Naive thymus-derived CD4-positive, alpha-beta T cell (primary cell): ENCODE measurements at regions of chr19 and their contacts with region 1.

Region 1: GRCh38 chr19:3984908-3985642 is at the start of gene EEF2:
- DNase-seq: peak; percentile 89 to 96 (median 93)
- ATAC-seq: peak; percentile 72
- H3K4me3 ChIP-seq: peak within 1 kb of the TSS; percentile 98
- H3K4me3 Mint-ChIP-seq: peak within 1 kb of the TSS; percentile 91 to 99 (median 98)
- H3K27ac ChIP-seq: peak within 1 kb of the TSS; percentile 87
- H3K27ac Mint-ChIP-seq: peak within 1 kb of the TSS; percentile 93 to 99 (median 96)
- H3K4me1 ChIP-seq: peaks cover 37 to 43% of the 10 kb centered on the region in 2 donors
- H3K4me1 Mint-ChIP-seq: peaks cover 30 to 57% (median 48%) of the 10 kb centered on the region in 7 donors
- H3K27me3 ChIP-seq: no peaks in the 10 kb centered on the region
- H3K27me3 Mint-ChIP-seq: no peaks in the 10 kb centered on the region
- total RNA-seq, gene EEF2: 1,791 to 2,674 (median 2,346) TPM

Region 2: DNA sequence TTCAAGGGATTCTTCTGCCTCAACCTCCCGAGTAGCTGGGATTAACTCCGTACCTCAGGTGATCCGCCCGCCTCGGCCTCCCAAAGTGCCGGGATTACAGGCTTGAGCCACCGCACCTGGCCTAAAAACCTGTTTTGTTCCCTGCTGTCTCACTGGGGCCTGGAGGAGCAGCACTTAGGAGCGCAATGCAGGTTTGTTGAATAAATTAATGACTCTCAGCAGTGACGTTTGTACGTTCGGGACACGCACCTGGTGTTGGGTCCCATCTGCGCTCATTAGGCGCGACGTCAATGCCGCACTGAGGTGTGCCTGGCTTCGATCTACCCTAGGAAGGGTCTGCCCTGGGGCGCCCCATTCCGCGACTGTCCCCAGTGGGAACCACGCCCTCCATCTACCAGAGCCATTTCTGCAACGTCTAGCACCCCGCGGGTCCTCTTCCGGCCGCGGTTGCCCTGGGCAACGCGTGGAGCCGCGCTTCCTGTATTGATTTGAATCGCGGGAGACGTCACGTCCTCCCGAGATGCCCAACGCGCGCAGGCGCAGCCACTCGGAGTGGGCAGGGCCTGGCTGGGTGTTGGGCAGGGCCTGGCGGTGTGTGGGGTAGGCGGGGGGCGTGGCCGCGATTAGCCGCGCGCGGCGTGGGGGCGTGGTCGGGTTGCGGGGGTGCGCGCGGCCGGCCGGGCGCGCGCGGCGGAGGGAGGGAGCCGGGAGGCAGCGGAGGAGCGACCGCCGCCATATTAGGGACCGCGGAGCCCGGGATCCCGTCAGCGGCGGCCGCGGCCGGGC is 479.3 kb before region 1 on chr19 and contains the start of gene FZR1:
- CTCF ChIA-PET with region 1: no interaction called
- POLR2A ChIA-PET with region 1: interaction called, 4 read pairs
- intact Hi-C with region 1: loop called in 1 of 2 experiments (anchors 10 kb)
- DNase-seq: peak; percentile 98 to 100 (median 100)
- ATAC-seq: peak; percentile 96
- H3K4me3 ChIP-seq: peak within 1 kb of the TSS; percentile 97
- H3K4me3 Mint-ChIP-seq: peak within 1 kb of the TSS; percentile 88 to 98 (median 92)
- H3K27ac ChIP-seq: peak within 1 kb of the TSS; percentile 95
- H3K27ac Mint-ChIP-seq: peak within 1 kb of the TSS; percentile 91 to 98 (median 96)
- H3K4me1 ChIP-seq: peaks cover 14 to 23% of the 10 kb centered on the region in 2 donors
- H3K4me1 Mint-ChIP-seq: peaks cover 29 to 57% (median 44%) of the 10 kb centered on the region in 7 donors
- H3K27me3 ChIP-seq: no peaks in the 10 kb centered on the region
- H3K27me3 Mint-ChIP-seq: peaks cover 0 to 3% (median 0%) of the 10 kb centered on the region in 5 donors
- total RNA-seq, gene FZR1: 60.7 to 90.7 (median 71.3) TPM

Region 3: GRCh38 chr19:4007021-4007835 is 22.2 kb after region 1 on chr19 and contains the start of gene PIAS4:
- CTCF ChIA-PET with region 1: interaction called, 14 read pairs
- POLR2A ChIA-PET with region 1: interaction called, 31 read pairs
- intact Hi-C with region 1: loop called (anchors 1 kb)
- DNase-seq: peak; percentile 93 to 97 (median 96)
- ATAC-seq: peak; percentile 95
- H3K4me3 ChIP-seq: peak within 1 kb of the TSS; percentile 76
- H3K4me3 Mint-ChIP-seq: peak within 1 kb of the TSS; percentile 82 to 93 (median 88)
- H3K27ac ChIP-seq: peak within 1 kb of the TSS; percentile 75
- H3K27ac Mint-ChIP-seq: peak within 1 kb of the TSS; percentile 31 to 93 (median 85)
- H3K4me1 ChIP-seq: peaks cover 26 to 27% of the 10 kb centered on the region in 2 donors
- H3K4me1 Mint-ChIP-seq: peaks cover 13 to 33% (median 23%) of the 10 kb centered on the region in 7 donors
- H3K27me3 ChIP-seq: no peaks in the 10 kb centered on the region
- H3K27me3 Mint-ChIP-seq: no peaks in the 10 kb centered on the region
- total RNA-seq, gene PIAS4: 23.9 to 40.6 (median 28.8) TPM

Region 4: DNA sequence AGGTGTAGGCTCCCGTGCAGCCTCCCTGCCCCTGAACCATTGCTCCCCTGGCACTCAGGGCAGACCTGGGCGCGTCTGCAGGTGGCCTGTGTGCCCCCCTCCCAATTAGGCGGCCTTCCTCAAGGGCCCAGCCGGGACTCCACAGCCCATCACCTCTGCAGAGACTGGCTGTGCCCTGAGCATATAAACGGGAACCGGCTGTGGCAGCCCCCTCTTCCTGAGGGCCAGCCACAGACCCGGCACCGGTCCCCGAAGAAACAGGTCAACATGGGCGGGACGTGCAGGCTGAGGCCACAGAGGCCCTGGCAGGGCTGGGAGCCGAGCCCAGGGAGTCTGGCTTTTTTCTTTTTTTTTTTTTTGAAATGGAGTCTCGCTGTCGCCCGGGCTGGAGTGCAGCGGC is 34.5 kb after region 1 on chr19:
- CTCF ChIA-PET with region 1: no interaction called
- POLR2A ChIA-PET with region 1: no interaction called
- intact Hi-C with region 1: no loop called
- DNase-seq: no peak
- ATAC-seq: no peak
- H3K4me3 ChIP-seq: no peak overlapping the region
- H3K4me3 Mint-ChIP-seq: no peak overlapping the region
- H3K27ac ChIP-seq: no peak overlapping the region
- H3K27ac Mint-ChIP-seq: no peak overlapping the region
- H3K4me1 ChIP-seq: peaks cover 0 to 6% of the 10 kb centered on the region in 2 donors
- H3K4me1 Mint-ChIP-seq: peaks cover 0 to 23% (median 12%) of the 10 kb centered on the region in 7 donors
- H3K27me3 ChIP-seq: no peaks in the 10 kb centered on the region
- H3K27me3 Mint-ChIP-seq: no peaks in the 10 kb centered on the region

Region 5: GRCh38 chr19:4123615-4124568 is 138.8 kb after region 1 on chr19 and contains the start of gene MAP2K2:
- CTCF ChIA-PET with region 1: no interaction called
- POLR2A ChIA-PET with region 1: no interaction called
- intact Hi-C with region 1: loop called in 1 of 2 experiments (anchors 1 kb)
- DNase-seq: peak; percentile 91 to 99 (median 96)
- ATAC-seq: peak; percentile 96
- H3K4me3 ChIP-seq: peak within 1 kb of the TSS; percentile 77
- H3K4me3 Mint-ChIP-seq: peak within 1 kb of the TSS; percentile 89 to 100 (median 94)
- H3K27ac ChIP-seq: peak within 1 kb of the TSS; percentile 80
- H3K27ac Mint-ChIP-seq: peak within 1 kb of the TSS; percentile 89 to 97 (median 93)
- H3K4me1 ChIP-seq: peaks cover 10 to 11% of the 10 kb centered on the region in 2 donors
- H3K4me1 Mint-ChIP-seq: peaks cover 17 to 31% (median 25%) of the 10 kb centered on the region in 7 donors
- H3K27me3 ChIP-seq: no peaks in the 10 kb centered on the region
- H3K27me3 Mint-ChIP-seq: no peaks in the 10 kb centered on the region
- total RNA-seq, gene MAP2K2: 87.4 to 162 (median 123) TPM

Region 6: DNA sequence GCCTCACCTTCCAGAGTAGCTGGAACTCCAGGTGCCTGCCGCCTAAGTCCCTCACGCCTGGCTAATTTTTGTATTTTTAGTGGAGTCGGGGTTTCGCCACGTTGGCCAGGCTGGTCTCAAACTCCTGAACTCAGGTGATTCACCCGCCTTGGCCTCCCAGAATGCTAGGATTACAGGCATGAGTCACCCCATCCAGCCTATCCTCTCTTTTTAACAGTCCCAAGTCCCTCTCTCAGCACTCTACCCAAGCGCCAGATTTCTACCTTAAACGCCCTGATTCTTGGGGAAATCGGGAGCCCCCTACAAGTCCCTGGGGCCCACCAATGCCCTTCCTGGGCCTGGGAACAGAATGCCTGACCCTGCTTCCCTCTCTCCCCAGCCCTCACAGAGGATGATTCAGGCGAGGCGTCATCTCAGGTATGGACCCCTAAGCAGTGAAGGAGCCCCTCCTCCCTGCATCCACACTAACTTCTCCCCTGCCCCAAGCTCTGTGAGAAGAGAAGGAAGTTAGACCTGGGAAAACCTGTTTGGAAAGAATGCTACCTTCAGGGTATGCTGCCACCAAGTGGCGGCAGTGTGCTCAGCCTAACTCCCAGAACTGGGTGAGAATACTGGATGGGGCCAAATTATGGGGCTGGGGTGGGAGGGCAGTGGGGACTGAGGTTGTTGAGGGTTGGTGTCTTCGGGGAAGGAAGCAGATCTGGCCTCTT is 223.5 kb after region 1 on chr19:
- CTCF ChIA-PET with region 1: interaction called, 5 read pairs
- POLR2A ChIA-PET with region 1: no interaction called
- intact Hi-C with region 1: loop called in 1 of 2 experiments (anchors 1 kb)
- DNase-seq: no peak
- ATAC-seq: no peak
- H3K4me3 ChIP-seq: no peak overlapping the region
- H3K4me3 Mint-ChIP-seq: no peak overlapping the region
- H3K27ac ChIP-seq: no peak overlapping the region
- H3K27ac Mint-ChIP-seq: no peak overlapping the region
- H3K4me1 ChIP-seq: no peaks in the 10 kb centered on the region
- H3K4me1 Mint-ChIP-seq: peaks cover 0 to 6% (median 3%) of the 10 kb centered on the region in 7 donors
- H3K27me3 ChIP-seq: no peaks in the 10 kb centered on the region
- H3K27me3 Mint-ChIP-seq: peaks cover 0 to 3% (median 0%) of the 10 kb centered on the region in 5 donors

Region 7: DNA sequence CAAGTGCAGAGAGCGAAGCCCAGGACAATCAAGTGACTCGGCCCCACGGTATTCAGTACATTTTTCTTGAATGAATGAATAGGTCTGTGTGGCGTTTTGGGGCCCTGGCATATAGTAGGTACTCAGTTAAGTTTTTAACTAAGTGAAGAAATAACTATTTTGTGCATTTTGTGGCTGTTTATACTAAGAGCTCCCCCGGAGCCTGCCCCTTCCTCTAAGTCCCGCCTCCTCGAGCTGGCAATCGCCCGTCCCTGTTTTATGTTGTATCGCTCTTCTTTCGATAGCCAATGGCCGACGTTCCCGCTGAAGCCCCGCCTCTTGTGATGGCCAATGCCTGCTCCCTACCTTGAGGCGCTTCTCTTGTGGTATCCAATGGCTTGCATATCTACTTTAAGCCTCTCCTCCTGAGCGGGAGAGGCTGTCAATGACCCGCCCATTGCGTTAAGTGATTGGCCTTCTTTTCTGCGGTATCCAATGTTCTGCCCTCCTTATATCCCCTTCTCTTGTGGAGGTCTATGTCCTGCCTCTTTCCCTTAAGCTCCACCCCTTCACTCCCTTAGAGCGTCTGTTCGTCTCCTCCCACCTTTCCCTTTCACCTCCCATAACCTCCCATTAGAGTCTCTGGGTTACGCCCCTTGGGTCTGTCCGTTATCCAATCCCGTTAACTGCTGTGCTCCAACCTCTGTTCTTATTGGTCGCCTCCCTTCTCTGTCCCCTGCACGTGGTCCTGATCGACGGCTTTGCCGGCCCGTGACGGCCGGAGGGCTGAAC is 486.5 kb after region 1 on chr19:
- CTCF ChIA-PET with region 1: no interaction called
- POLR2A ChIA-PET with region 1: no interaction called
- intact Hi-C with region 1: loop called (anchors 5 kb)
- DNase-seq: peak; percentile 78 to 100 (median 98)
- ATAC-seq: peak; percentile 90
- H3K4me3 ChIP-seq: peak overlapping the region; percentile 71
- H3K4me3 Mint-ChIP-seq: no peak overlapping the region
- H3K27ac ChIP-seq: peak overlapping the region; percentile 77
- H3K27ac Mint-ChIP-seq: no peak overlapping the region
- H3K4me1 ChIP-seq: peaks cover 7 to 12% of the 10 kb centered on the region in 2 donors
- H3K4me1 Mint-ChIP-seq: peaks cover 11 to 25% (median 24%) of the 10 kb centered on the region in 7 donors
- H3K27me3 ChIP-seq: no peaks in the 10 kb centered on the region
- H3K27me3 Mint-ChIP-seq: no peaks in the 10 kb centered on the region